IMR-90 (cell line): ENCODE measurements at regions of chr6 and their contacts with region 1.

Region 1: GRCh38 chr6:118283766-118284165 is 264.3 kb upstream of the PLN start:
- DNase-seq: peak; percentile 68
- ATAC-seq: peak; percentile 55
- H3K4me3 ChIP-seq: no peak overlapping the region
- H3K27ac ChIP-seq: no peak overlapping the region
- H3K4me1 ChIP-seq: no peaks in the 10 kb centered on the region
- H3K27me3 ChIP-seq: no peaks in the 10 kb centered on the region; the same call in 1 of the 2 replicates
- CTCF ChIP-seq: peak; percentile 85
- POLR2A ChIP-seq: no peak
- RAD21 ChIP-seq: peak; percentile 90

Region 2: DNA sequence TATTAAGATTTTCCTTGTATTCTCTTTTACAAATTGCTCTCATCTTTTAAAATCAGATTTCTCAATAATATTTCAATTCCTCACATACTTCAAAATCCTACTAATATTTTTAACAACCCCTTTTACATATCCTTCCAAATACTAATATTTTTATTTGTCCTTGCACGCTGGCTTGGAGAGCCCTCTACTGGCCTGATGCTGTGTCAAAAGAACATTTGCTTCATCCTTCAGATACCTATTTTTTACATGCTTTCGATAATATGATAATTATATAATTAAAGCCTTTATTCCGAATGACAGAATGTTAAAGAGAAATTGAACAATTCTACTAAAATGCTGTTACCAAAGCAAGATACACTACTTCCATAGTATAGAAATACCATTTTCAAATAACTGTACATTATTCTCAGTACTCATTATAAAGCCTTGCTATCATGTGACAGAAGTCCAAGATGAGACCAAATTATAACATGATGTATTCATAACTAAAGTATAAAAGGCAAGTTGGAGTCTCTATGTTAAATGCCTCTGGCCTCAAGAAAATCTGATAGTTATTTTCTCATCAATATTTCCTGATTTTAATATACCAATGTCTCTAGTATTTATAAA is 225.3 kb after region 1 on chr6:
- CTCF ChIA-PET with region 1: interaction called, 8 read pairs
- POLR2A ChIA-PET with region 1: no interaction called
- dilution Hi-C with region 1: no loop called
- in situ Hi-C with region 1: loop called (anchors 5 kb)
- intact Hi-C with region 1: loop called (anchors 1 kb)
- DNase-seq: peak; percentile 55
- ATAC-seq: 0 out of 2 replicates have a peak, but pooled peaks have one; percentile 48
- H3K4me3 ChIP-seq: no peak overlapping the region
- H3K27ac ChIP-seq: no peak overlapping the region
- H3K4me1 ChIP-seq: no peaks in the 10 kb centered on the region
- H3K27me3 ChIP-seq: no peaks in the 10 kb centered on the region
- CTCF ChIP-seq: peak; percentile 79
- POLR2A ChIP-seq: no peak
- RAD21 ChIP-seq: peak; percentile 73

Region 3: DNA sequence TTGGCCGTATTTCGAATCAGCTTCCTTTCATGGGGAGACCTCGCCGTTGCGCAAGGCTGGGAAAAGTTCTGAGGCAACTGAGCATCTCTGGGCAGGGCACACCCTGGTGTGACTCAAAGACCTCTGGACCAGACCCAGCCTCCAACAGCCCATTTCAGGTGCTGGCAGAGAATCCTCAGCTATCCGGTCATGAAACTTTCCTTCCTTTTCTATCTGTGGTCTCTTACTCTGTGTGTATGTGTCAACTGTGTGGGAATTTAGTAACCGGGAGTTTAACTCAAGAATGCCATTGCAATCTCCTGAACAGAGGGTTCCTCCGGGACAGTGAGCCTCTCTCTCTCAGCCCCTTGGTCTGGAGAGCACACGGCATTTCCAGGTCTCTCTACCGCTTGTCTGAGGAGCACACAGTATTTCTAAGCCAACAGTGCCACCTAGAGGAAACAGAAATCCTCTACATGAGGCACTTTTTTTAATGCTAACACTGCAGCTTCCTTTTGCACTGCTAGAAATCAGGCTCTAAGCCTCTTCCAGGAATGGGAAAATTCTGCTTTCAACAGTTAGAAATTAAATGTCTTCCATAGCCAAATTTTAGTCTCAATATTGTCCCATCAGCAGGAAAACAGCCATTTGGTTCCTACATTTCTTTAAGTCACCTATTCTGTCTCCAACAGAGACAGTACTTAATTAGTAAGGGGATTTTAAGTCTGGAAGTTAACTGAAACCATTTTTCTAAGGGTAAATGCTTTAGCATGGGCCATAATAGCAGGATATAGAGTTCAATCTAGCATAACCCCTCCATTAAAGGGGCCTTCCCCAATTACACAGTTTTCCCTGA is 297.0 kb after region 1 on chr6:
- CTCF ChIA-PET with region 1: interaction called, 5 read pairs
- POLR2A ChIA-PET with region 1: no interaction called
- dilution Hi-C with region 1: no loop called
- in situ Hi-C with region 1: no loop called
- intact Hi-C with region 1: loop called (anchors 1 kb)
- DNase-seq: peak; percentile 78
- ATAC-seq: peak; percentile 76
- H3K4me3 ChIP-seq: no peak overlapping the region
- H3K27ac ChIP-seq: no peak overlapping the region
- H3K4me1 ChIP-seq: peaks cover 8% of the 10 kb centered on the region
- H3K27me3 ChIP-seq: no peaks in the 10 kb centered on the region
- CTCF ChIP-seq: peak; percentile 77
- POLR2A ChIP-seq: no peak
- RAD21 ChIP-seq: peak; percentile 80

Region 4: GRCh38 chr6:118776607-118777549 is 493.1 kb after region 1 on chr6:
- CTCF ChIA-PET with region 1: interaction called, 3 read pairs
- POLR2A ChIA-PET with region 1: no interaction called
- dilution Hi-C with region 1: no loop called
- in situ Hi-C with region 1: loop called (anchors 10 kb)
- intact Hi-C with region 1: loop called (anchors 1 kb)
- DNase-seq: peak; percentile 79
- ATAC-seq: peak; percentile 87
- H3K4me3 ChIP-seq: no peak overlapping the region
- H3K27ac ChIP-seq: no peak overlapping the region
- H3K4me1 ChIP-seq: peaks cover 4% of the 10 kb centered on the region; the same call in 1 of the 2 replicates
- H3K27me3 ChIP-seq: peaks cover 4% of the 10 kb centered on the region
- CTCF ChIP-seq: peak; percentile 73
- POLR2A ChIP-seq: no peak
- RAD21 ChIP-seq: peak; percentile 72

Region 5: DNA sequence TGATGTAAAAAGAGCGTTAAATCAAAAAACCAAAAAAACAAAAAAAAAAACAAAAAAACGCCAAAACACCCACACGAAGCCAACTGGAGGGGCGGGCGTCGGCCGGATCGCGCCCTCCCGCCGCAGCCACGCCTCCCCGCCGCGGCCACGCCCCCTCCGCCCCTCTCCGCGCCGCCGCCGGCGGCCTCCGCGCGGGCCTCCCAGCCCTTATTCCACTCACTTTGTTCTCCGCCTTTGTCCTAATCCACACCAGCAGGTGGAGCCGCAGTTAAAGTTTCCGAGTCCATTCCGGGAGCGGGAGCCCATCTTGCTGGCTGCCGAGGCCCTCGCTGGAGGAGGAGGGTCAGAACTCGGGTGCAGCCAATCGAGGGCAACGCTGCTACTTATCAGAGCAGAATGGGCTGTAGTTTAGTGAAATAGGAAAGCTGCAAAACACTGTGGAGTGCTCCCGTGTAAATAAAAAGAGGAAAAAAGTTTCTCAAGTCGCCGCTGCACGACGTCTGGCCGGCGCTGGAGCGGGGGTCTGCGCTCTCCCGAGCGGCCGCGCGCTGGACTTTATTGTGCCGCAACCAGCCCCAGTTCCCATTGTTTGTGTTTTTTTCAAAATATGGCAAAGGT is 610.1 kb after region 1 on chr6 and contains the start of gene ASF1A:
- CTCF ChIA-PET with region 1: no interaction called
- POLR2A ChIA-PET with region 1: no interaction called
- dilution Hi-C with region 1: no loop called
- in situ Hi-C with region 1: no loop called
- intact Hi-C with region 1: loop called (anchors 5 kb)
- DNase-seq: peak; percentile 98
- ATAC-seq: peak; percentile 89
- H3K4me3 ChIP-seq: peak within 1 kb of the TSS; percentile 79
- H3K27ac ChIP-seq: peak within 1 kb of the TSS; percentile 79
- H3K4me1 ChIP-seq: peaks cover 2% of the 10 kb centered on the region; the same call in 1 of the 2 replicates
- H3K27me3 ChIP-seq: no peaks in the 10 kb centered on the region
- CTCF ChIP-seq: peak; percentile 82
- POLR2A ChIP-seq: peak; percentile 49
- RAD21 ChIP-seq: peak; percentile 64
- total RNA-seq, gene ASF1A: 11.1 and 24.4 TPM in 2 replicates

Region 6: DNA sequence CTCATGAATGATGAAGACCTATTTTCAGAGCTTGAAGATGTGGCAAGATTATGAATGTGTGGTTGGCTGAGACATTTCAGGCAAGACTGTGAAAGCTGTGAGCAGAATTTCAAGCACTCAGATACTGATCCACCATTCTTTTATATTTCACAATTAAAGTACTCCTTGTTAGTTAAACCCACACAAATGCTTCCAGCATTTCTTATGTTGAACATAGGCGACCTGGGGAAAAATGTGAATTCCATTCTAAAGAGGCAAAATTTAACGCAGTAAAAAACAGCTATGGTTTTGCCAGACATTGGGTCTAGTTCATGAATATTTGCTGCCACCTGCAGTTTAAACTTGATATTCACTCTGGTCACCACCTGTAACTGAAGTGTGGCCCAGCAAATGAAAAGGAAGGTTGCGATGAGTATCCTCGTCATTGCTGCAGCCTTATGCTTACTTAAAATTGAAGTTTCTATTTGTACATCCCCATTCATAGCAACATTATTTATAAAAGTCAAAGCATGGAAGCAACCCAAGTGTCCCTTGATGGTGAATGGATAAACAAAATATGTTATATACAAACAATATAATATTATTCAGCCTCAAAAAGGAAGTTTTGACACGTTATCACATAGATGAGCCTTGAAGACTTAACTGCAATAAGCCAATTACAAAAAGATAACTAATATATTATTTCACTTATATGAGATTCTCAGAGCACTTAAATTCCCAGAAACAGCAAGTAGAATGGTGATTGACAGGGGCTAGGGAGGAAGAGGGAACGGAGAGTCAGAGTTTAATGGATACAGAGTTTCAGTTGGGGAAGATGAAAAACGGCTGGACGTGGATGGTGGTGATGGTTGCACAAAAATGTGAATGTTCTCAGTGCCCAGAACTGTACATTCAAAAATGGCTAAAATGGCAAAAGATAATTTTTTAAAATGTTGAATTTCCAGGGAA is 827.1 kb after region 1 on chr6:
- CTCF ChIA-PET with region 1: no interaction called
- POLR2A ChIA-PET with region 1: no interaction called
- dilution Hi-C with region 1: no loop called
- in situ Hi-C with region 1: no loop called
- intact Hi-C with region 1: loop called (anchors 5 kb)
- DNase-seq: peak; percentile 56
- ATAC-seq: peak; percentile 85
- H3K4me3 ChIP-seq: no peak overlapping the region
- H3K27ac ChIP-seq: no peak overlapping the region
- H3K4me1 ChIP-seq: no peaks in the 10 kb centered on the region
- H3K27me3 ChIP-seq: peaks cover 5% of the 10 kb centered on the region; the same call in 1 of the 2 replicates
- CTCF ChIP-seq: peak; percentile 64
- POLR2A ChIP-seq: no peak
- RAD21 ChIP-seq: peak; percentile 71

Region 7: GRCh38 chr6:119241111-119241465 is 957.3 kb after region 1 on chr6:
- CTCF ChIA-PET with region 1: no interaction called
- POLR2A ChIA-PET with region 1: no interaction called
- dilution Hi-C with region 1: no loop called
- in situ Hi-C with region 1: no loop called
- intact Hi-C with region 1: no loop called
- DNase-seq: peak; percentile 59
- ATAC-seq: peak; percentile 81
- H3K4me3 ChIP-seq: no peak overlapping the region
- H3K27ac ChIP-seq: peak overlapping the region; percentile 2; the same call in 1 of the 2 replicates
- H3K4me1 ChIP-seq: peaks cover 4% of the 10 kb centered on the region; the same call in 1 of the 2 replicates
- H3K27me3 ChIP-seq: no peaks in the 10 kb centered on the region
- CTCF ChIP-seq: no peak
- POLR2A ChIP-seq: no peak
- RAD21 ChIP-seq: no peak